Psoas muscle (tissue), 8 donors: ENCODE measurements at regions of chr12 and their contacts with region 1.

Region 1: DNA sequence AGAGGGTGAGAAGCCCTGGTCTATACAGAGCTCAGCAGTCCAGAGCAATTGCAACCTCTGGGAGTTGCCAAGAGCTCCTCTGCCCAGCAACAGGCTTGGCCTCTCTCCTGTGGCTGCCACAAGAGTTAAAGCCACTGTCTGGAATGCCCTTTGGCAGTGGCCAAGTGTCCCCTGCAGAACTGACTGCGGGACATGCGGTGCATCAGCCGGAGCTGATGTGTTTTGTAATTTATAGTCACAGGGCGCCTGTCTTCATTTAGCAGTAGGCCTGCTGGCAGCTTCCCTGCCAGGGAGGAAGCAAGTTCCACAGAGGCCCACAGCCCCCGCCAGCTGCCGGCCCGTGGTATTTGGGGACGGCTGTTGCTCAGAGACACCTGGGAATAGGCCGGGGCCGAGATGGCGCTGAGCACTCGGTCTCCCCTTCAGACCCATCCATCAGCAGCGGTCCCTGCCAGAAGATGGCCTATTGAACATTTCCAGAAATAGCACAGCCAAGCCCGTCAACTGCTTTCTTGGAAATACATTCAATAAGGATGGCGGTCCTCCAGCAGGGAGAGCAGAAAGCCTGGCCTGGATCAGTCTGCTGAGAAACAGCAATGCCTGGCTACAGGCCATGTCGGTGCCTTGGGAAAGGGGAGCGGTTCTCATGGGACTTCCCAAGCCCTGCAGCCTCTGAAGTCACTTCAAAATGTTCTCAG is 217.4 kb downstream of the CRADD start:
- DNase-seq: peak; percentile 93 to 94
- ATAC-seq: peak; percentile 90 to 95 (median 94)
- H3K4me3 ChIP-seq: peak overlapping the region; percentile 44
- H3K27ac ChIP-seq: peak overlapping the region; percentile 84
- H3K4me1 ChIP-seq: peaks cover 35% of the 10 kb centered on the region
- H3K27me3 ChIP-seq: no peaks in the 10 kb centered on the region
- CTCF ChIP-seq: no peak

Region 2: GRCh38 chr12:93785262-93786010 is 109.1 kb before region 1 on chr12:
- intact Hi-C with region 1: loop called in 1 of 2 experiments (anchors 10 kb)
- DNase-seq: peak; percentile 48 to 50
- ATAC-seq: peak; percentile 89 to 90 (median 90)
- H3K4me3 ChIP-seq: peak overlapping the region; percentile 47
- H3K27ac ChIP-seq: peak overlapping the region; percentile 85
- H3K4me1 ChIP-seq: peaks cover 46% of the 10 kb centered on the region
- H3K27me3 ChIP-seq: no peaks in the 10 kb centered on the region
- CTCF ChIP-seq: no peak

Region 3: DNA sequence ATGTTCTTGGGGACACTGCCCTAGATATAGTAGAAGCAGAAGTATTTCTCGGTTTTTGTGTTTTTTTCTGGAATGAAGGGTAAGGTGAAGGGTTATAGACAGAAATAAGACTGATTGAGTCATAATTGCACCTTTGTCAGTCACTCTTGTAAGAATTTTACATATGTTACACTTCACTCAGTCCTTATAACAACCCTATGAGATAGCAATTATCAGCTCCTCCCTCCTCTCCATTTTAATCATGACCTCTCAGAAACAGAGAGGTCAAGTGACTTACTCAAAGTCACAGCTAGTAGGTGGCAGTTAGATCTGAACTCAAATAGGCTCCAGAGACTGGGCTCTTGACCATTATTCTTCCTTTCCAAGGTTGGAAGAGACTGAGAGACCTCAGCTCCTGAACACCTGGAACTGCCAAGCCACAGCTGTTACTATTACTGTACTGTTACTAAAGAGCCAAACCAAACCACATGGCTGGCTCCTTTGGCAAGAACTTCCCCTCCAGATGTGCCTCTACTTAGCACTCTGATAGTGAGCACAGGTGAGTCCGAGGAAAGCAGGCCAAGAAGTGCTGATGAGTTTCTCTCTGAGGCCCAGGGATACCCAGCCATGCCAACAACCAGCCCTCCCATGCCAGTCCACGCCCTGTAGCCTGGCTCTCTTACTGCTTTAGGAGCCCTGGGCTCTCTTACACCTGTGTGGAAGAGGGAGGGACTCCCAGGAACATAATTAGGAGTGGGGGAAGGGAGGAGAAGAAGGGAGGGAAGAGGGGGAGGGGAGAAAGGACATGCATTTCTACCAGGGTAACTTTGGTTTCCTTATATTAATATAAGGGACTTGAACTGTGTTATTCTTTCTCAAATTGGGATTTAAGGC is 96.0 kb before region 1 on chr12:
- intact Hi-C with region 1: no loop called
- DNase-seq: no peak
- ATAC-seq: peak in 1 of 4 donors; percentile 59
- H3K4me3 ChIP-seq: no peak overlapping the region
- H3K27ac ChIP-seq: no peak overlapping the region
- H3K4me1 ChIP-seq: peaks cover 29% of the 10 kb centered on the region
- H3K27me3 ChIP-seq: no peaks in the 10 kb centered on the region
- CTCF ChIP-seq: no peak

Region 4: GRCh38 chr12:93813972-93814821 is 80.3 kb before region 1 on chr12:
- intact Hi-C with region 1: loop called in 1 of 2 experiments (anchors 5 kb)
- DNase-seq: peak; percentile 81 to 90
- ATAC-seq: peak; percentile 91 to 94 (median 93)
- H3K4me3 ChIP-seq: peak overlapping the region; percentile 58
- H3K27ac ChIP-seq: peak overlapping the region; percentile 95
- H3K4me1 ChIP-seq: peaks cover 40% of the 10 kb centered on the region
- H3K27me3 ChIP-seq: no peaks in the 10 kb centered on the region
- CTCF ChIP-seq: no peak

Region 5: GRCh38 chr12:93943766-93944165 is 49.2 kb after region 1 on chr12:
- intact Hi-C with region 1: loop called in 1 of 2 experiments (anchors 5 kb)
- DNase-seq: peak; percentile 55 to 83
- ATAC-seq: peak; percentile 98 to 100 (median 100)
- H3K4me3 ChIP-seq: no peak overlapping the region
- H3K27ac ChIP-seq: no peak overlapping the region
- H3K4me1 ChIP-seq: peaks cover 8% of the 10 kb centered on the region
- H3K27me3 ChIP-seq: no peaks in the 10 kb centered on the region
- CTCF ChIP-seq: peak; percentile 38

Region 6: GRCh38 chr12:94074980-94075928 is 180.7 kb after region 1 on chr12:
- intact Hi-C with region 1: loop called in 1 of 2 experiments (anchors 10 kb)
- DNase-seq: peak; percentile 65 to 77
- ATAC-seq: peak; percentile 72 to 90 (median 80)
- H3K4me3 ChIP-seq: peak overlapping the region; percentile 27
- H3K27ac ChIP-seq: peak overlapping the region; percentile 67
- H3K4me1 ChIP-seq: peaks cover 21% of the 10 kb centered on the region
- H3K27me3 ChIP-seq: no peaks in the 10 kb centered on the region
- CTCF ChIP-seq: peak; percentile 60

Region 7: GRCh38 chr12:94101738-94102660 is 207.5 kb after region 1 on chr12:
- intact Hi-C with region 1: loop called in 1 of 2 experiments (anchors 5 kb)
- DNase-seq: peak; percentile 82 to 89
- ATAC-seq: peak; percentile 83 to 92 (median 84)
- H3K4me3 ChIP-seq: peak overlapping the region; percentile 72
- H3K27ac ChIP-seq: no peak overlapping the region
- H3K4me1 ChIP-seq: peaks cover 6% of the 10 kb centered on the region
- H3K27me3 ChIP-seq: peaks cover 0 to 3% (median 0%) of the 10 kb centered on the region in 3 donors
- CTCF ChIP-seq: peak; percentile 84